MCF 10A (cell line): ENCODE measurements at regions of chr18 and their contacts with region 1.

Region 1: GRCh38 chr18:267688-268552 is at the start of gene THOC1:
- DNase-seq: peak; percentile 90
- H3K4me3 Mint-ChIP-seq: peak within 1 kb of the TSS; percentile 100
- H3K27ac Mint-ChIP-seq: peak within 1 kb of the TSS; percentile 100
- H3K4me1 Mint-ChIP-seq: peaks cover 6% of the 10 kb centered on the region
- H3K27me3 Mint-ChIP-seq: no peaks in the 10 kb centered on the region
- CTCF ChIP-seq: no peak
- total RNA-seq, gene THOC1: 40.9 and 44.6 TPM in 2 replicates

Region 2: DNA sequence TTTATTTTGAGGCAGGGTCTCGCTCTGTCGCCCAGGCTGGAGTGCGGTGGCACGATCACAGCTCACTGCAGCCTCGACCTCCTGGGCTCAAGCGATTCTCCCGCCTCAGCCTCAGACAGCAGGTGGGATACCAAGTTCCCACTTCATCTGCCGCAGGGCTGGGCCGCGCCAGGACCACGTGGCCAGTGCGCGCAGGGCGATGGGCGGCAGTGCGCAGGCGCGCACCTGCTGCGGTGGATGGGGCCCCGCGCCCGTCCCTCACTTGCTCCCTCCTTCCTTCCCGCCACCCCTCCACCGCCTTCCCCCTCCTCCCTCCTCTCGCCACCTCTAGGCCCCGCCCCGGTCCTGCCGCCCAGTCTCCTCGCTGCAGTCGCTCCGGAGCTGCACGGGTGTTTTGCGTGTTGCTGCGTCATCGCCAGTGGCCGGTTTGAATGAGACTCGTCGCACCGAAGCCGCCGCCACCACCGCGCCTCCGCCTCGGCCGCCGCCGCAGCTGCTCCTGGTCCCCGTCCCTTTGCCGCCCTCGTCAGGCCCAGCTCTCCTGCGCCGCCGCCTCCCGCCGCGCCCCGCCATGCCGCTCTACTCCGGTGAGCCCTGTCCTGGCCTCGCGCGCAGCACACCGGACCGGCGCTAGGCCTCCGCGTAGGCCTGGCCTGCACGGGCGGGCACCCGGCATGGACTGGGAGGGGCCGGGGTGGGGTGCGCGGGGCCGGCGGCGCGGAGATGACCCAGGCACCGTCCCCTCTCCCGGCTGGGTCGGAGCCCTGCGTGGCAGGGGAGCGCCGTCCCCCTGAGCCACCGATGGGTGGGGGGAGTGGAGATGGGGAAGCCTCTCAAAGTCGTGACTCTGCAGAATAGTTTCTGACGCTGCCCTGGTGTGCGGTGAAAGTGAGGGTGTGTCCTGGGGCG is 109.5 kb before region 1 on chr18 and contains the start of gene USP14:
- CTCF ChIA-PET with region 1: interaction called, 3 read pairs
- POLR2A ChIA-PET with region 1: interaction called, 18 read pairs
- intact Hi-C with region 1: no loop called
- DNase-seq: peak; percentile 97
- H3K4me3 Mint-ChIP-seq: peak within 1 kb of the TSS; percentile 93
- H3K27ac Mint-ChIP-seq: peak within 1 kb of the TSS; percentile 92
- H3K4me1 Mint-ChIP-seq: peaks cover 20% of the 10 kb centered on the region
- H3K27me3 Mint-ChIP-seq: no peaks in the 10 kb centered on the region
- CTCF ChIP-seq: no peak
- total RNA-seq, gene USP14: 76.7 and 79.1 TPM in 2 replicates

Region 3: GRCh38 chr18:250688-251422 is 17.1 kb before region 1 on chr18:
- CTCF ChIA-PET with region 1: interaction called, 4 read pairs
- POLR2A ChIA-PET with region 1: interaction called, 11 read pairs
- intact Hi-C with region 1: no loop called
- DNase-seq: peak; percentile 27
- H3K4me3 Mint-ChIP-seq: no peak overlapping the region
- H3K27ac Mint-ChIP-seq: no peak overlapping the region
- H3K4me1 Mint-ChIP-seq: no peaks in the 10 kb centered on the region
- H3K27me3 Mint-ChIP-seq: no peaks in the 10 kb centered on the region
- CTCF ChIP-seq: no peak

Region 4: GRCh38 chr18:394997-395383 is 127.1 kb after region 1 on chr18:
- CTCF ChIA-PET with region 1: no interaction called
- POLR2A ChIA-PET with region 1: no interaction called
- intact Hi-C with region 1: no loop called
- DNase-seq: no peak
- H3K4me3 Mint-ChIP-seq: no peak overlapping the region
- H3K27ac Mint-ChIP-seq: no peak overlapping the region
- H3K4me1 Mint-ChIP-seq: no peaks in the 10 kb centered on the region
- H3K27me3 Mint-ChIP-seq: no peaks in the 10 kb centered on the region
- CTCF ChIP-seq: no peak